CD4-positive, alpha-beta T cell (primary cell): ENCODE measurements at regions of chr4 and their contacts with region 1.

Region 1: GRCh38 chr4:110165382-110166285 is 32.8 kb downstream of the ELOVL6 start:
- DNase-seq: peak; percentile 25 to 85 (median 59)
- ATAC-seq: peak; percentile 100
- H3K4me3 ChIP-seq: no peak overlapping the region
- H3K4me3 Mint-ChIP-seq: peak overlapping the region; percentile 46
- H3K27ac ChIP-seq: peak overlapping the region; percentile 44 to 77
- H3K27ac Mint-ChIP-seq: peak overlapping the region; percentile 87
- H3K4me1 ChIP-seq: peaks cover 25% of the 10 kb centered on the region
- H3K4me1 Mint-ChIP-seq: peaks cover 37% of the 10 kb centered on the region
- H3K27me3 ChIP-seq: no peaks in the 10 kb centered on the region
- H3K27me3 Mint-ChIP-seq: no peaks in the 10 kb centered on the region
- CTCF ChIP-seq: no peak

Region 2: DNA sequence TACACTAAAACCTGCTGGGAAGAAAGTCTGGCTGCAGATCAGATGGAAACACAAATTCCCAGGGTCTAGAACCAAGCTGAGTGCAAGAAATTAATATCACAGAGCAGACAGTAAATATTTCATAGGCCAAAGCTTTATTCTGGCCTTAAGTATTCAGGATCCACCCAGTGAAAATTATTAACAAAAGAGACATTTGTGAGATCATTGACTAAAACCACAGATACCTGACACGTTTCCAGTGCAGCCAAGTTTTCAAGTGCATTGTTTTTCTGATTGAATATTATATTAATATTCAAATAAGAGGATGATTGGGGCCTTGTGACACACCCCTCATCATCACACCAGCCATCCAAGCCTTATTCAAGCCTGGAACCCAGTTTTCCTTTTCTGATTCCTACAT is 22.5 kb after region 1 on chr4:
- CTCF ChIA-PET with region 1: no interaction called
- POLR2A ChIA-PET with region 1: interaction called, 13 read pairs
- intact Hi-C with region 1: loop called (anchors 1 to 2 kb)
- DNase-seq: no peak
- ATAC-seq: no peak
- H3K4me3 ChIP-seq: no peak overlapping the region
- H3K4me3 Mint-ChIP-seq: no peak overlapping the region
- H3K27ac ChIP-seq: no peak overlapping the region
- H3K27ac Mint-ChIP-seq: no peak overlapping the region
- H3K4me1 ChIP-seq: no peaks in the 10 kb centered on the region
- H3K4me1 Mint-ChIP-seq: no peaks in the 10 kb centered on the region
- H3K27me3 ChIP-seq: no peaks in the 10 kb centered on the region
- H3K27me3 Mint-ChIP-seq: no peaks in the 10 kb centered on the region
- CTCF ChIP-seq: no peak

Region 3: DNA sequence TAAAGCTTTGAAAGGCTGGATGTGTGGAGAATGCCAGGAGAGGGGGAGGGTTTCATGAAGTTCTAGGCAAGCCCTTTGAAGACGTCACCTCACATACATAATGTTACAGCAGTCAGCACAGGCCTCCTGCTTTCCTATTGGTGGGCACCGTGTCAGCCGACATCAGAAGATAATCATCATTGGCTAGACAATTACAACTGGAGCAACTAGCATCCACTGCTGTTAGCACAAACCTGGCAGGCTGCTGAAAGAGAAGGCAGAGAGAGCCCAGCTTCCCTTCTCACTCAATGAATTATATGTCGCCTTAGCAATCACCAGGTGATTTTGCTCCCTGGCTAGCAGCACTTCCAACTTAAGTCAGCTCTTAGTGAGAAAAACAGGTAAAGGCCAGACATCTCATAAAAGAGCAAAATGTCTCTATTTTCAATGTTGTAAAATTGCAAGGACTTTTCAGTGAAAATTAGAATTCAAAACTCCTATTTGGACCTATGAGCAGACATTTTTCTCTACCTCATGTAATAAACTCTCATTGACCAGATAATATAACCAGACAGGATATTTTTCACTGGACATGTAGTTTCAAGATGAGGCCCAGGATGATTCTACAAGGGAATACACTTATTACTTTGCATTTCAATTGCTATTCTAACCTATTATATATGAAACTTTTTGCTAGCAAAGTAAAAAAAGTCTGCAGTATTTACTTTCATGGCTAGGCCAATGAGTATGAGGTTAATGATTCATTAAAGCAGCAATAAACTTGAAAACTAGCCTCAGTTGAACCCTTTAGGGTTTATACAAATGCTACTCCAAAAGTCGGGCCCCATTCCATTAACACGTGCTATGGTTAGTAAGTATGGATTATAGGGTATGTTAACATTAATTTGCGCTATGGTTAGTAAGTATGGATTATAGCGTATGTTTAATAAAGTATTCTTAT is 28.5 kb after region 1 on chr4:
- CTCF ChIA-PET with region 1: interaction called, 4 read pairs
- POLR2A ChIA-PET with region 1: interaction called, 32 read pairs
- intact Hi-C with region 1: loop called (anchors 1 to 2 kb)
- DNase-seq: peak; percentile 53 to 92 (median 68)
- ATAC-seq: peak; percentile 90
- H3K4me3 ChIP-seq: no peak overlapping the region
- H3K4me3 Mint-ChIP-seq: peak overlapping the region; percentile 58
- H3K27ac ChIP-seq: peak overlapping the region; percentile 25 to 35
- H3K27ac Mint-ChIP-seq: peak overlapping the region; percentile 87
- H3K4me1 ChIP-seq: peaks cover 21% of the 10 kb centered on the region
- H3K4me1 Mint-ChIP-seq: peaks cover 41% of the 10 kb centered on the region
- H3K27me3 ChIP-seq: no peaks in the 10 kb centered on the region
- H3K27me3 Mint-ChIP-seq: no peaks in the 10 kb centered on the region
- CTCF ChIP-seq: no peak

Region 4: GRCh38 chr4:110270492-110271197 is 105.0 kb after region 1 on chr4:
- CTCF ChIA-PET with region 1: no interaction called
- POLR2A ChIA-PET with region 1: no interaction called
- intact Hi-C with region 1: no loop called
- DNase-seq: no peak
- ATAC-seq: no peak
- H3K4me3 ChIP-seq: no peak overlapping the region
- H3K4me3 Mint-ChIP-seq: no peak overlapping the region
- H3K27ac ChIP-seq: no peak overlapping the region
- H3K27ac Mint-ChIP-seq: no peak overlapping the region
- H3K4me1 ChIP-seq: no peaks in the 10 kb centered on the region
- H3K4me1 Mint-ChIP-seq: no peaks in the 10 kb centered on the region
- H3K27me3 ChIP-seq: no peaks in the 10 kb centered on the region
- H3K27me3 Mint-ChIP-seq: peaks cover 7% of the 10 kb centered on the region
- CTCF ChIP-seq: no peak